ENCODE measurements at regions of chr3 and their contacts with region 1.

Region 1: DNA sequence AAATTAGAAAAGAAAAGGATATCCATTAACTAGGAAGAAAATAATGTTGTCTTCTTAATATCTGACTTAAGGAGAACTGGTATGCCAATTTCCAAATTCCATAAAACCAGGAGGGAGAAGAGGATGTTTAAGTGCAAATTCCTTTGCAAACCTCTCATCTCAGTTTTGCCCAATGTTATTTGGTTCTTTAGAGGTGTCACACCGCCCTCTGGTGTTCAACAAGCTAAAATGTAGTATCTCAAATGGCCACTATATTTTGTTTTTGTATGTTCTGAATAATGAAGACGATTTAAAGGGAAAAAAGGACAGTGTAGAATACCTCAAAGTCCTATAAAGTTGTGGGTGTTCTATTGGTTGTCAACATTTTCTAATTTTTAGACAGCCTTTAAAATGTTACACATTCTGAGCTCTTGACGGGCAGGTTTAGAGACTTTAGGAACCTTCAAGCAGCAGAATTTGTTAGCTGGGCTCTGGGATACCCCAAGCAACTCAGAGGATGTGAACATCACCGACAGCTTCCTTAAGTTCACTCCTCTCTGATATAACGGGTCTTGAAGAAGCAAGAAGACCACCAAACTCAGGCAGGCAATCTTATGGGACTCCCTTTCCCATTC is 458.3 kb downstream of the MFSD1 start:
- DNase-seq: peak; percentile 45 to 57
- H3K4me3 ChIP-seq: no peak overlapping the region
- H3K27ac ChIP-seq: no peak overlapping the region
- H3K4me1 ChIP-seq: no peaks in the 10 kb centered on the region
- H3K27me3 ChIP-seq: no peaks in the 10 kb centered on the region
- CTCF ChIP-seq: peak; percentile 91

Region 2: GRCh38 chr3:158845765-158846350 is 414.3 kb before region 1 on chr3:
- CTCF ChIA-PET with region 1: interaction called, 10 read pairs
- POLR2A ChIA-PET with region 1: no interaction called
- intact Hi-C with region 1: loop called (anchors 1 kb)
- DNase-seq: peak; percentile 43 to 49
- H3K4me3 ChIP-seq: no peak overlapping the region
- H3K27ac ChIP-seq: no peak overlapping the region
- H3K4me1 ChIP-seq: no peaks in the 10 kb centered on the region
- H3K27me3 ChIP-seq: no peaks in the 10 kb centered on the region
- CTCF ChIP-seq: peak; percentile 96

Region 3: DNA sequence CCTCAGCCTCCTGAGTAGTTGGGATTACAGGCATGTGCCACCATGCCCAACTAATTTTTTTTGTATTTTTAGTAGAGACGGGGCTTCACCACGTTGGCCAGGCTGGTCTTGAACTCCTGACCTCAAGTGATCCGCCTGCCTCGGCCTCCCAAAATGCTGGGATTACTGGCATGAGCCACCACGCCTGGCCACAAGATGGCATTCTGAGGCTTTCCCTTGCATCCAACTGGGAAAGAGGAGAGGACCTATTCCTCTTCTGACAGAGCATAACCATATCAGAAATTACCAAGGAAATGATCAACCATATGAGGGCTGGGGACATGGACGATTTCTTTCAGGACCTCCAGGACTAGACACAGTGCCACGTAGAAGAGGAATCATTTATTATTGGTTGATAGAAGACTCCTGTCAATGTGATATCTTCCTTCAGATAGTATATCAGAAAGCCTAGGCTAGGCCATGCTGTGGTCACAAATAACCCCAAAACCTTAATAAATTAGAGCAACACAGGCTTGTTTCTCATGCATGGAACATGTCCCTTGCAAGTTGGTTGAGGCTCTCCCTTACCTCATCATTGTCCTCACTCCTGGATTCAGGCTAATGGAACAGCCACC is 356.2 kb after region 1 on chr3:
- CTCF ChIA-PET with region 1: no interaction called
- POLR2A ChIA-PET with region 1: no interaction called
- intact Hi-C with region 1: loop called (anchors 10 kb)
- DNase-seq: peak; percentile 43 to 69
- H3K4me3 ChIP-seq: no peak overlapping the region
- H3K27ac ChIP-seq: no peak overlapping the region
- H3K4me1 ChIP-seq: peaks cover 16% of the 10 kb centered on the region
- H3K27me3 ChIP-seq: no peaks in the 10 kb centered on the region
- CTCF ChIP-seq: peak; percentile 80

Region 4: GRCh38 chr3:159828542-159828943 is 568.4 kb after region 1 on chr3:
- CTCF ChIA-PET with region 1: no interaction called
- POLR2A ChIA-PET with region 1: no interaction called
- intact Hi-C with region 1: loop called (anchors 5 kb)
- DNase-seq: no peak
- H3K4me3 ChIP-seq: no peak overlapping the region
- H3K27ac ChIP-seq: no peak overlapping the region
- H3K4me1 ChIP-seq: peaks cover 39% of the 10 kb centered on the region
- H3K27me3 ChIP-seq: no peaks in the 10 kb centered on the region
- CTCF ChIP-seq: peak; percentile 76

Region 5: GRCh38 chr3:160003520-160004128 is 743.5 kb after region 1 on chr3:
- CTCF ChIA-PET with region 1: interaction called, 4 read pairs
- POLR2A ChIA-PET with region 1: interaction called, 3 read pairs
- intact Hi-C with region 1: loop called (anchors 1 kb)
- DNase-seq: peak in 1 of 2 experiments; percentile 65
- H3K4me3 ChIP-seq: no peak overlapping the region
- H3K27ac ChIP-seq: no peak overlapping the region
- H3K4me1 ChIP-seq: no peaks in the 10 kb centered on the region
- H3K27me3 ChIP-seq: no peaks in the 10 kb centered on the region
- CTCF ChIP-seq: peak; percentile 77

Region 6: DNA sequence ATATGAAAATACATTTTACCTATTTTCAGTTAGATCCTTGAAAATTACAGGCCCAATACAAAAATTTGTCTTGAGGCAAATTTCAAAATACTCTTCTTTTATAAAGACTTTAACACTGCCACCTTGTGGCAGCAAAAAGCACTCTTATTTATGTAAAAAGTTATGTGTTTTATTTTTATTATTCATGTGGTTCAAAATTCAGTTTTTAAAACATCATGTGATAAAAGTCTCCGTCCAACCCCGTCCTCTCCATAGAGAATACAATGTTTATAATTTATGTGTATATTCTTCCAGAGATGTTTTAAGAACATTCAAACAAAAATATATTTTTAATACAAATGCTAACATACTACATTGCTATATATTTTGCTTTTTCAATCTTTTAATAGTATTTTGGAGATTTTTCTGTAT is 1226.3 kb after region 1 on chr3:
- CTCF ChIA-PET with region 1: no interaction called
- POLR2A ChIA-PET with region 1: no interaction called
- intact Hi-C with region 1: loop called (anchors 5 kb)
- DNase-seq: no peak
- H3K4me3 ChIP-seq: no peak overlapping the region
- H3K27ac ChIP-seq: no peak overlapping the region
- H3K4me1 ChIP-seq: no peaks in the 10 kb centered on the region
- H3K27me3 ChIP-seq: no peaks in the 10 kb centered on the region
- CTCF ChIP-seq: peak; percentile 85